Endothelial cell of umbilical vein (primary cell): ENCODE measurements at regions of chr5 and their contacts with region 1.

Region 1: GRCh38 chr5:66757188-66757833 is 161.1 kb downstream of the MAST4 start:
- DNase-seq: peak; percentile 69
- H3K4me3 ChIP-seq: no peak overlapping the region
- H3K27ac ChIP-seq: no peak overlapping the region
- H3K4me1 ChIP-seq: no peaks in the 10 kb centered on the region
- H3K27me3 ChIP-seq: peaks cover 9 to 36% of the 10 kb centered on the region in 2 experiments
- CTCF ChIP-seq: peak; percentile 26 to 27
- POLR2A ChIP-seq: no peak

Region 2: DNA sequence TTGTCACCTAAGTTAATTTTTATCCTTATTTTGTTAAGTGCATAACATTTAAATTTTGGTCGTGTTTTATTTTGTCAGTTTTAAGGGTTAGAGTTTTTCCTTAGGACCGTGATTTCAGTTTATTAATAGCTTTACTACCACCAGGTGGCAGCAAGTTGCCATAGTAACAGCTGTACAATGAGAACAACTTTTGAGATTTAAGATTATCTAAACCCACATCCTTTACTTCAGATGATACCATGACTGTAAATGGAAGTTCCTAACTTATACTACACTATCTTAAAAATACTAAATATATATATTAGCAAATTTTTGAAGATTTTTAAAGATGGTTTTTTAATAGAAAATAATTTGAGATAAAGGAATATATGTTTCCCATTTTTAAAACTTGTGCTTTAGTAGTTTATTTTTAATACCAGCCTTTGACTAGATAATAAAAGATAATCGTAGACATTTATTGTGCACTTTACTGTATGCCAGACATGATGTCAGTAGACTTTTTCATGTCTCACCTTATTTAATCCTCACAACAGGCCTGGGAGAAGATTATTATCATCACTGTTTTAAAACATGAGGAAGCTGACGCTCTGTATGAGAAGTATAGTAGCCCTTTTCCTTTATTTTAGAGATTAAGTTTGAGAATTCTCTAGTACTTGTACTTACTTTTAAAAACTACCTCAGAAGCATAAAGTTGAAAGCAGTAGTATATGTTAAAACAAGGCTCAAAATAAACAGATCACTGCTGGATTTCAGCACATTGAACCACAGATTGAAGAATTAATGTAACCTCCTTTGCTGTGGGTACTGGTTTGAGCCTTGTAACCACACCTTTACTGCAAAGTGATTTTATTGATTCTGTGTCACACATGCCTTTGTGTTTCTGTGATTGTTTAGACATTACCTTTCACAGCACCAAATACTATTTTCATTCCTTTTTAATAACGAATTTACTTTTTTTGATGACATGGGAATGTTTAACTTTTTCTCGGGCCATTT is 585.7 kb before region 1 on chr5:
- CTCF ChIA-PET with region 1: interaction called, 4 read pairs
- POLR2A ChIA-PET with region 1: no interaction called
- dilution Hi-C with region 1: no loop called
- intact Hi-C with region 1: loop called (anchors 5 kb)
- DNase-seq: peak; percentile 59
- H3K4me3 ChIP-seq: no peak overlapping the region
- H3K27ac ChIP-seq: no peak overlapping the region
- H3K4me1 ChIP-seq: no peaks in the 10 kb centered on the region
- H3K27me3 ChIP-seq: no peaks in the 10 kb centered on the region
- CTCF ChIP-seq: peak in 1 of 2 donors; percentile 35
- POLR2A ChIP-seq: no peak

Region 3: GRCh38 chr5:66312291-66312690 is 445.0 kb before region 1 on chr5:
- CTCF ChIA-PET with region 1: interaction called, 253 read pairs
- POLR2A ChIA-PET with region 1: no interaction called
- dilution Hi-C with region 1: no loop called
- intact Hi-C with region 1: loop called (anchors 1 kb)
- DNase-seq: no peak
- H3K4me3 ChIP-seq: no peak overlapping the region
- H3K27ac ChIP-seq: no peak overlapping the region
- H3K4me1 ChIP-seq: no peaks in the 10 kb centered on the region
- H3K27me3 ChIP-seq: peaks cover 3% of the 10 kb centered on the region in 2 experiments
- CTCF ChIP-seq: no peak
- POLR2A ChIP-seq: no peak

Region 4: DNA sequence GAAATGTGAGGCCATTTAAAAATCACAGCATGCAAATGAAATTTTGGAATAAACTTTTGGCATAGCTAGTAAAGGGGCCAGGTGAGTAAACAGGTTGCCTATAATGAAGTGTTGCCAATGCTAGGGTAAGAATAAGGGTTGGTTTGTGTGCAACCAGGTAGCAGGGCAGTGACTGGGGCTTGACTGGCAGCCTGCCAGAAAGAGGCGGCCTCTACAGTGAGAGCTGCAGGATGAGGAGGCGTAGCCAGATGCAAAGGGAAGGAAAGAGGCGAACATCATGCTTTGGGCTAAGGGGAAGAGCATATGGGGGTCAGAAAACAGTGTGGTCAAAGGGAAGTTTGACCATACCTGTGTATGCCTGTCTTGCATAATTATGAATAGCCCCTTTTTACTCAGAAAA is 90.5 kb before region 1 on chr5:
- CTCF ChIA-PET with region 1: no interaction called
- POLR2A ChIA-PET with region 1: no interaction called
- dilution Hi-C with region 1: no loop called
- intact Hi-C with region 1: no loop called
- DNase-seq: no peak
- H3K4me3 ChIP-seq: no peak overlapping the region
- H3K27ac ChIP-seq: no peak overlapping the region
- H3K4me1 ChIP-seq: no peaks in the 10 kb centered on the region
- H3K27me3 ChIP-seq: peaks cover 2 to 3% of the 10 kb centered on the region in 2 experiments
- CTCF ChIP-seq: no peak
- POLR2A ChIP-seq: no peak

Region 5: GRCh38 chr5:66742083-66742895 is 15.0 kb before region 1 on chr5:
- CTCF ChIA-PET with region 1: interaction called, 18 read pairs
- POLR2A ChIA-PET with region 1: no interaction called
- dilution Hi-C with region 1: no loop called
- intact Hi-C with region 1: no loop called
- DNase-seq: no peak
- H3K4me3 ChIP-seq: no peak overlapping the region
- H3K27ac ChIP-seq: no peak overlapping the region
- H3K4me1 ChIP-seq: no peaks in the 10 kb centered on the region
- H3K27me3 ChIP-seq: peaks cover 6 to 11% of the 10 kb centered on the region in 2 experiments
- CTCF ChIP-seq: peak in 1 of 2 donors; percentile 16
- POLR2A ChIP-seq: no peak

Region 6: GRCh38 chr5:67059744-67060490 is 302.6 kb after region 1 on chr5:
- CTCF ChIA-PET with region 1: no interaction called
- POLR2A ChIA-PET with region 1: no interaction called
- dilution Hi-C with region 1: no loop called
- intact Hi-C with region 1: no loop called
- DNase-seq: peak; percentile 82
- H3K4me3 ChIP-seq: peak overlapping the region in 1 of 3 experiments; percentile 30
- H3K27ac ChIP-seq: peak overlapping the region; percentile 89
- H3K4me1 ChIP-seq: peaks cover 68% of the 10 kb centered on the region
- H3K27me3 ChIP-seq: no peaks in the 10 kb centered on the region
- CTCF ChIP-seq: no peak
- POLR2A ChIP-seq: no peak

Region 7: GRCh38 chr5:67268231-67269021 is 511.1 kb after region 1 on chr5:
- CTCF ChIA-PET with region 1: no interaction called
- POLR2A ChIA-PET with region 1: no interaction called
- dilution Hi-C with region 1: no loop called
- intact Hi-C with region 1: no loop called
- DNase-seq: peak; percentile 84
- H3K4me3 ChIP-seq: peak overlapping the region in 1 of 3 experiments; percentile 30
- H3K27ac ChIP-seq: peak overlapping the region; percentile 78
- H3K4me1 ChIP-seq: peaks cover 25% of the 10 kb centered on the region
- H3K27me3 ChIP-seq: no peaks in the 10 kb centered on the region
- CTCF ChIP-seq: no peak
- POLR2A ChIP-seq: no peak